CD4-positive, alpha-beta memory T cell (primary cell): ENCODE measurements at regions of chr6 and their contacts with region 1.

Region 1: GRCh38 chr6:139291813-139292619 is at the start of gene TXLNB:
- DNase-seq: peak; percentile 81 to 95 (median 89)
- H3K4me3 ChIP-seq: peak within 1 kb of the TSS; percentile 26 to 42
- H3K4me3 Mint-ChIP-seq: peak within 1 kb of the TSS; percentile 79 to 91 (median 85)
- H3K27ac ChIP-seq: peak within 1 kb of the TSS; percentile 59
- H3K27ac Mint-ChIP-seq: peak within 1 kb of the TSS; percentile 94 to 99 (median 97)
- H3K4me1 ChIP-seq: peaks cover 59% of the 10 kb centered on the region
- H3K4me1 Mint-ChIP-seq: peaks cover 44 to 76% (median 58%) of the 10 kb centered on the region in 4 donors
- H3K27me3 ChIP-seq: no peaks in the 10 kb centered on the region
- H3K27me3 Mint-ChIP-seq: no peaks in the 10 kb centered on the region
- total RNA-seq, gene TXLNB: 1.4 to 1.6 TPM

Region 2: GRCh38 chr6:138773177-138774091 is 518.6 kb before region 1 on chr6 and contains the start of gene CCDC28A:
- CTCF ChIA-PET with region 1: no interaction called
- POLR2A ChIA-PET with region 1: interaction called, 3 read pairs
- intact Hi-C with region 1: loop called (anchors 1 kb)
- DNase-seq: peak; percentile 96 to 98 (median 97)
- H3K4me3 ChIP-seq: peak within 1 kb of the TSS; percentile 72 to 99
- H3K4me3 Mint-ChIP-seq: peak within 1 kb of the TSS; percentile 91 to 100 (median 99)
- H3K27ac ChIP-seq: peak within 1 kb of the TSS; percentile 90
- H3K27ac Mint-ChIP-seq: peak within 1 kb of the TSS; percentile 97 to 100 (median 100)
- H3K4me1 ChIP-seq: peaks cover 18% of the 10 kb centered on the region
- H3K4me1 Mint-ChIP-seq: peaks cover 12 to 46% (median 26%) of the 10 kb centered on the region in 4 donors
- H3K27me3 ChIP-seq: no peaks in the 10 kb centered on the region
- H3K27me3 Mint-ChIP-seq: peaks cover 0 to 3% of the 10 kb centered on the region in 2 donors
- total RNA-seq, gene CCDC28A: 32.4 to 33.9 TPM

Region 3: GRCh38 chr6:139134817-139135581 is 157.0 kb before region 1 on chr6 and contains the start of gene HECA:
- CTCF ChIA-PET with region 1: interaction called, 3 read pairs
- POLR2A ChIA-PET with region 1: interaction called, 27 read pairs
- intact Hi-C with region 1: no loop called
- DNase-seq: peak; percentile 98 to 100 (median 99)
- H3K4me3 ChIP-seq: peak within 1 kb of the TSS; percentile 75 to 95
- H3K4me3 Mint-ChIP-seq: peak within 1 kb of the TSS; percentile 90 to 98 (median 95)
- H3K27ac ChIP-seq: peak within 1 kb of the TSS; percentile 97
- H3K27ac Mint-ChIP-seq: peak within 1 kb of the TSS; percentile 98 to 100 (median 99)
- H3K4me1 ChIP-seq: peaks cover 60% of the 10 kb centered on the region
- H3K4me1 Mint-ChIP-seq: peaks cover 48 to 84% (median 57%) of the 10 kb centered on the region in 4 donors
- H3K27me3 ChIP-seq: no peaks in the 10 kb centered on the region
- H3K27me3 Mint-ChIP-seq: no peaks in the 10 kb centered on the region
- total RNA-seq, gene HECA: 154 to 161 TPM

Region 4: DNA sequence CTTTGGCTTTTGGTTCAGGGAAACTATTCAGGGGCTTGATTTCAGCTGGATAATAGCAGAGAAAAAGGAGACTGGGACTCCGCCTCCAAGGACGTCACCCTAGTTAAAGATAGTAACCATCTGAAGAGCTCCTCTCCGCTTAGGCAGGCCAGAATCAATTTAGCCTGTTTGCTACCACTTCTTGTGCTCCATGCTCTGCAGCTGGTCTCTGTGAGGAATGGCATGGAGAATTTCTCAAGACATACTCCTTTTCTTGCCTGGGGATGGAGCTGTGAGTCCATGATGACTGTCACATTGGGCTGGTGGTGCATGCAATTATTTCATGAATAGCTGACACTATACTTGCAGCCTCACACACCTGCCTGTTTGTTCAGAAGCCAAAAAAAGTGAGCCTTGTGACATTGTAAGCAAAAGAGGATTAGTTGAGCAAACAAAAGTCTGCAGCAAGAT is 61.6 kb before region 1 on chr6:
- CTCF ChIA-PET with region 1: interaction called, 9 read pairs
- POLR2A ChIA-PET with region 1: interaction called, 11 read pairs
- intact Hi-C with region 1: no loop called
- DNase-seq: peak in 4 of 5 donors; percentile 17 to 31 (median 22)
- H3K4me3 ChIP-seq: no peak overlapping the region
- H3K4me3 Mint-ChIP-seq: no peak overlapping the region
- H3K27ac ChIP-seq: no peak overlapping the region
- H3K27ac Mint-ChIP-seq: peak overlapping the region in 2 of 7 donors; percentile 19 to 65
- H3K4me1 ChIP-seq: no peaks in the 10 kb centered on the region
- H3K4me1 Mint-ChIP-seq: peaks cover 6 to 13% (median 9%) of the 10 kb centered on the region in 4 donors
- H3K27me3 ChIP-seq: no peaks in the 10 kb centered on the region
- H3K27me3 Mint-ChIP-seq: no peaks in the 10 kb centered on the region

Region 5: DNA sequence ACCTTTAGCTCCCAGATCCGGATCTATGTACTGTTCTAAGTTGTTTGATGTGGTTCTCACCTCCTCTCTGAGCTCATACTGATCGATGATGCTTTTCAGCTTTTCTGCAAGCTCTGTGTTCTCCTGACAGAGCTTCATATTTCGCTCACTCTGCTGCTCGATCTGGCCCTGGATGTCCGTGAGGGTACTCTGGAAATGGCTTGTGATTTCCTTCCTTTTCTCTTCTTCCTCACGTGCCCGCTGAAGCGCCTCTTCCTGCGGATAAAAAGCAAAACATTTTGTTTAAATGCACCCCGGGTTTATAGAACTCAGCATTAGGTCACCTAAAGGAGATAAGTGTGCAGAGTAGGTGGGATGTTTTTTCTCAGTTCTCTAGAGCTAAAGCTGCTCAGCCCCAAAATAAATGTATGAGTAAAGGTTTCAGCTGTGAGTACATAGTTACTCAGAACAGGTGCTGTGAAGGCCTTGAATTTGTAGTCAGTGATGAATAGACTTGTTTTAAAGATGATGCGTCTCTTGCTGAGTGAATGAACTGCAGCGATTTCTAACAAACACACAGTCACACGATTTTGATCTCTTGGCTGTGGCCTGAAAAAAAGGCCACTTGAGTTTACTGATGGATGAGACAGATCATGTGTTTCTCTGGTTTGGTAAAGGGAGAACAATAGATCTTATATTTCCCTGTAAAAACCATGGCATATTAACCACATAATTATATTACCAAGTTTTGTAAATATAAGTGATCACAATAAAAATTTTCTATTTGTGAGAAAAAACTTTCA is 29.3 kb before region 1 on chr6:
- CTCF ChIA-PET with region 1: interaction called, 24 read pairs
- POLR2A ChIA-PET with region 1: interaction called, 54 read pairs
- intact Hi-C with region 1: no loop called
- DNase-seq: peak; percentile 53 to 62 (median 59)
- H3K4me3 ChIP-seq: peak overlapping the region in 1 of 2 donors; percentile 22
- H3K4me3 Mint-ChIP-seq: peak overlapping the region; percentile 74 to 86 (median 82)
- H3K27ac ChIP-seq: peak overlapping the region; percentile 44
- H3K27ac Mint-ChIP-seq: peak overlapping the region; percentile 59 to 96 (median 90)
- H3K4me1 ChIP-seq: peaks cover 39% of the 10 kb centered on the region
- H3K4me1 Mint-ChIP-seq: peaks cover 34 to 56% (median 39%) of the 10 kb centered on the region in 4 donors
- H3K27me3 ChIP-seq: no peaks in the 10 kb centered on the region
- H3K27me3 Mint-ChIP-seq: no peaks in the 10 kb centered on the region

Region 6: GRCh38 chr6:139364302-139364981 is 72.4 kb after region 1 on chr6:
- CTCF ChIA-PET with region 1: interaction called, 48 read pairs
- POLR2A ChIA-PET with region 1: interaction called, 19 read pairs
- intact Hi-C with region 1: loop called (anchors 1 kb)
- DNase-seq: peak in 4 of 5 donors; percentile 66 to 74 (median 68)
- H3K4me3 ChIP-seq: no peak overlapping the region
- H3K4me3 Mint-ChIP-seq: peak overlapping the region in 7 of 8 donors; percentile 27 to 64 (median 36)
- H3K27ac ChIP-seq: no peak overlapping the region
- H3K27ac Mint-ChIP-seq: peak overlapping the region in 6 of 7 donors; percentile 2 to 82 (median 62)
- H3K4me1 ChIP-seq: peaks cover 20% of the 10 kb centered on the region
- H3K4me1 Mint-ChIP-seq: peaks cover 28 to 45% (median 33%) of the 10 kb centered on the region in 4 donors
- H3K27me3 ChIP-seq: no peaks in the 10 kb centered on the region
- H3K27me3 Mint-ChIP-seq: no peaks in the 10 kb centered on the region